Esophagus squamous epithelium (tissue), 5 donors: ENCODE measurements at regions of chr1 and their contacts with region 1.

Region 1: GRCh38 chr1:58783993-58784757 is at the start of gene JUN:
- DNase-seq: peak; percentile 98
- H3K4me3 ChIP-seq: peak within 1 kb of the TSS; percentile 84 to 92 (median 86)
- H3K27ac ChIP-seq: peak within 1 kb of the TSS; percentile 96 to 100 (median 100)
- H3K4me1 ChIP-seq: peaks cover 4 to 43% (median 7%) of the 10 kb centered on the region in 3 donors
- H3K27me3 ChIP-seq: no peaks in the 10 kb centered on the region
- CTCF ChIP-seq: peak in 2 of 6 experiments; percentile 35 to 38
- POLR2A ChIP-seq: peak in 3 of 4 donors; percentile 73 to 99 (median 99)
- total RNA-seq, gene JUN: 48.5 to 128 (median 66.1) TPM

Region 2: GRCh38 chr1:58896246-58897183 is 112.3 kb after region 1 on chr1:
- intact Hi-C with region 1: loop called (anchors 10 kb)
- DNase-seq: no peak
- H3K4me3 ChIP-seq: no peak overlapping the region
- H3K27ac ChIP-seq: peak overlapping the region; percentile 5 to 79 (median 45)
- H3K4me1 ChIP-seq: peaks cover 33 to 83% (median 35%) of the 10 kb centered on the region in 3 donors
- H3K27me3 ChIP-seq: no peaks in the 10 kb centered on the region
- CTCF ChIP-seq: no peak
- POLR2A ChIP-seq: no peak

Region 3: DNA sequence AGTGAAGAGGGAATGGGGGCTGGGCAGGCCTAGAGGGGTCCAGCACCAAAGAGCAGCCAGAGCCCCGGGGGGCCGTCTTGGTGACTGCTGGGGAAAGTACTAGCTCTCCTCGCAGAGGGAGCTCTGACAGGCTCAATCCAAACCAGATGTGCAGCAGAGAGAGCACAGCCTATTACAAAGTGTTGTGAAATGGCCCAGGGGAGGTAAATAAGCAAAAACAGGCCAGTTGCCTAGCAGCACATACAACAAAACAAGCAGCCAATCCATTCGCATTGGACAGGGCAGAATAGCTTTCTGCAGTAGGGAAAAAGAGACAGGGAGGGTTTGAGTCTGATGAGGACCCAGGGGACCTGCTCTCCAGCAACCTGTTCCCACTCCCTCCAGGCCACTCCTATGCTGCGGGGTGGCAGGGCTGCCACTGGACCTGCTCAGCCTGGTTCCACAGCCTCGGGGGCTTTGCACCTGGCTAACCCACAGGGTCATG is 273.1 kb after region 1 on chr1:
- intact Hi-C with region 1: loop called (anchors 10 kb)
- DNase-seq: no peak
- H3K4me3 ChIP-seq: peak overlapping the region in 2 of 4 donors; percentile 21 to 29
- H3K27ac ChIP-seq: peak overlapping the region; percentile 70 to 90 (median 81)
- H3K4me1 ChIP-seq: peaks cover 29 to 73% (median 31%) of the 10 kb centered on the region in 3 donors
- H3K27me3 ChIP-seq: no peaks in the 10 kb centered on the region
- CTCF ChIP-seq: no peak
- POLR2A ChIP-seq: peak in 1 of 4 donors; percentile 42

Region 4: DNA sequence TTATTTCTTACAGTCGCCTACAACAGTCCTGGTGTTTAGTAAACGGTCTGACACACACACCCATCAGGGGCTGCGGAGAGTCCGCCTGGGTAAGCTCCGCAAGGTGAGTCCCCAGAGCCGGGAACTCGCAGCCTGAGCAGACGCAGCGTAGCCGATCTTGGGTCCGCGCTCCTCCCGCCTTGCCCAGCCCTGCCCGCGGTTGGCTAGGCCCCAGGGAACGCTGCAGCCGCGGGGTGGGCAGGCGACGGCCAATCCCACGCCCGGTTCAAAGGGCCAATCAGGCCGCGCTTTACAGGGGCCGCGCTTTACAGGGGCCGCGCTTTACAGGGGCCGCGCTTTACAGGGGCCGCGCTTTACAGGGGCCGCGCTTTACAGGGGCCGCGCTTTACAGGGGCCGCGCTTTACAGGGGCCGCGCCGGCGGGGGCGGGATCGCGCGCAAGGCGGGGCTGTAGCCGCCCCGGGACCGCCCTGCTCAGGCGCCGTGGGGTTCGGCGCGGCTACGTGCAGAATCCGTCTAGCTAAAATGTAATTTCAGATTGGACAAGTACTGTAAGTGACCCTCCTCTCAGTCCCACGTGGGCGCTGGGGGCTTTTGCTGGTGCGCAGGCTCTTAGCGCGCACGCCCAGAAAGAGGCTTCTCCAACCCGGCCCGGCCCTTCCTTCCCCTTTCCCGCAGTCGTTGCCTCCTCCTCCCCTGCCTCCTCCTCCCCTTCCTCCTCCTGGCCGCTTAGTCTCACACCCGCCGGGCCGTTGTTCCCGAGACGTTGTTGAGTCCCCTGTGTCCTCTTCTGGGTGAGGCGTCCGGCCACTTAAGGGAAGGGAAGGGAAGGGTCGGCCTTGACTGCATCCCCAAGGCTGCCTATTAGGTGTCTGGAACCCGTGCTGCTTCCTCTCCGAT is 512.4 kb after region 1 on chr1 and contains the start of gene FGGY:
- intact Hi-C with region 1: loop called (anchors 10 kb)
- DNase-seq: peak; percentile 81
- H3K4me3 ChIP-seq: peak within 1 kb of the TSS; percentile 40 to 74 (median 52)
- H3K27ac ChIP-seq: peak within 1 kb of the TSS; percentile 89 to 98 (median 91)
- H3K4me1 ChIP-seq: peaks cover 0 to 52% (median 10%) of the 10 kb centered on the region in 3 donors
- H3K27me3 ChIP-seq: no peaks in the 10 kb centered on the region
- CTCF ChIP-seq: peak in 3 of 6 experiments; percentile 5 to 11 (median 10)
- POLR2A ChIP-seq: peak in 3 of 4 donors; percentile 51 to 90 (median 81)
- total RNA-seq, gene FGGY: 6.0 to 18.1 (median 9.3) TPM

Region 5: GRCh38 chr1:59707178-59707791 is 923.1 kb after region 1 on chr1:
- intact Hi-C with region 1: loop called (anchors 10 kb)
- DNase-seq: no peak
- H3K4me3 ChIP-seq: no peak overlapping the region
- H3K27ac ChIP-seq: peak overlapping the region; percentile 24 to 77 (median 66)
- H3K4me1 ChIP-seq: peaks cover 23 to 62% (median 35%) of the 10 kb centered on the region in 3 donors
- H3K27me3 ChIP-seq: no peaks in the 10 kb centered on the region
- CTCF ChIP-seq: no peak
- POLR2A ChIP-seq: no peak